Dendritic cell treated with granulocyte-macrophage colony-stimulating factor and Interleukin-4, amounts not matched to agents 40 ng/mL and 50 ng/mL, for 4 days (primary cell): ENCODE measurements at regions of chr18 and their contacts with region 1.

Region 1: DNA sequence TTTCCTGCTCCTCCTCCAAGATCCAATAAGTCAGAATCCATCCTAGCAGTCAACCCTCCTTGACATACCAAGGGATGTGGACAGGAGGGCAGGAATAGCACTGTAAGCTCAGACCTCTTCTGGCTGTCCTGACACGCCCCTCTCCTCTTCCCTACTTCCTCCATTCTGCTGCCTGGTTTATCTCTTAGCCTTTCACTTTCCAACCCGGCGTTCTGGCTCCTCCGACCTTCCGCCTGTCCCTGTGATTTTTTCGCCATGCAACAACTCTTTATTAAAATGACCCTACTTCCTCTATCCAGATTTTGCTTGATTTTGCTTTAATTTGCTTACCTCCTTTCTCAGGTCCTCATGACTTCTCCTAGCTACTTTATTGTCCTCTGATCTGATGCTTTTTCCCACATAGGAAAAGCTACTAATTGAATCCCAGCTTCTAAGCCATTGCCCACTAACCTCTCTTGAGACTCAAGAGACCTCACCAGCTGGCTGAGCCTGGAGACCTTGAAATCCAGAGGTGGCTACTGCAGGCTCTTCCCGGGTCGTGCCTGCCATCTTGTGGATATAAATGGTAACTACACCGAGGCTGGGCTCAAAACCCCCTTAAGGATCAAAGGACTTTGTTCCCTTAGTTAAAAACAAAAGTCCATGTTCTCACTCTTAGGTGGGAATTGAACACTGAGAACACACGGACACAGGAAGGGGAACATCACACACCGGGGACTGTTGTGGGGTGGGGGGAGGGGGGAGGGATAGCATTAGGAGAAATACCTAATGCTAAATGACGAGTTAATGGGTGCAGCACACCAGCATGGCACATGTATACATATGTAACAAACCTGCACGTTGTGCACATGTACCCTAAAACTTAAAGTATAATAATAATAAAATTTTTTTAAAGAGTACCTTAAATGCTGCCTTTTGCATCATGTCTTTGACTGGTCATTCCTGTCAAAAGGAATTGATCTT is 139.4 kb downstream of the AKAIN1 start:
- H3K4me3 Mint-ChIP-seq: peak overlapping the region; percentile 64
- H3K27ac Mint-ChIP-seq: peak overlapping the region; percentile 5
- H3K4me1 Mint-ChIP-seq: peaks cover 24% of the 10 kb centered on the region
- H3K27me3 Mint-ChIP-seq: peaks cover 1% of the 10 kb centered on the region

Region 2: DNA sequence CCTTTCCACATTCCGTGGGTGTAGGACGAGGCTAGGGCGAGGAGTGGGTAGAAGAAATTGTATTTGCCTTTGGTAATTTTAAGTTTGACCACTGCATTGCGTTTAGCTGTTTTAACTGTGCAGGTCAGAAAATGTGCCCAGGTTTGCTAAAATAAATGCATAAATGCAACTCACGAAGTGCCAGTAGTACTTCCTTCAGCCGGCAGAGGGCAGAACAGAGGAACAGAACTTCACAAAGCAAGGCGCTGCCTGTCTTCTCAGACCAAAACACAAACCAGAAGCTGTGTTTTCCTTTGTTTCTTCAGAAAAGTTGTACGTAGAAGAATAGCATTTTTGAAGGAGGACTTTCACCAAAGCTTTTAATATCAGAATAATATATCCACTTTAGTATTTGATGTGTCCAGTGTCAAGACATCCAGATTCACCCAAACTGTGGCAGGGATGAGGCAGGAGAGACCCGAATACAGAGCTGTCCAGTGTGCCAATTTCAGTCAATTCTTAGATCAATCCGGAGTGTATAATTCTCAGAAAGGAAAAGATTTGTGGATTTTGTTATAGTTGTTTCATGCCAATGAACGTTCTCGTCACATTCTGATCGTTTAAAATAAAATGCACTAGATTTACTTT is 951.1 kb before region 1 on chr18:
- intact Hi-C with region 1: loop called (anchors 1 kb)
- H3K4me3 Mint-ChIP-seq: no peak overlapping the region
- H3K27ac Mint-ChIP-seq: no peak overlapping the region
- H3K4me1 Mint-ChIP-seq: no peaks in the 10 kb centered on the region
- H3K27me3 Mint-ChIP-seq: peaks cover 2% of the 10 kb centered on the region